ENCODE measurements at regions of chr12 and their contacts with region 1.

Region 1: DNA sequence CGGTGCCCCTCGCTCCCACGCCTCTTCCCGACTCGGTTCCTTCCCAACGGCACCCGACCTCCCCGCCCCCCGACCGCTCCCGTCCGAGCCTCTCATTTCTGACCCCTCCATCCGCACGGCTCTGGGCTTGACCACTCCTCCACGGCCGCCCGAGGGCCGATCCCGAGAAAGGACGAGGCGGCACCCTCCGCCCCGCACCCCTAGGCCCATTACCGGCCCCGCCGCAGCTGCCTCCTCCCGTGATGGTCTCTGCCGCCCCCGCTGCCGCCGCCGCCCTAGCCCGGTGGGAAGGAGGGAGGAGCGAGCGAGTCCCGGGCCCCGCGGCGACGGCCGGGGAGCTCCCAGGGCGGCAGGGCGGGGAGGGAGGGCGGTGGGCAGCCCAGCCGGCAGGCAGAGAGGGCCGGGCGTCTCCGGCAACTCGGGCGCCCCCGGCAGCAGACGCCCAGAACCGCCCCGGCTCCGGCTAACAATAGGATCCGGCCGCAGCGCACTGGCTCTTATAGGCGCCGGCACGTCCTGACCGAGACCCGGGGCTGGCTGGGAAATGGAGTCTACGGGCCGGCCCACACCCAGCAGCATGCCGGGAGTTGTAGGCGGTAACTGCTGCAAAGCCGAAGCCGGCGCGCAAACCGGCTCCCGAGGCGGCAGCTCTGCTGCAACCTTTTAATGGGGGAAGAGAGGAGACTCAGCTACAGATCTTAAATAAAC is at the start of gene CSRNP2:
- DNase-seq: peak; percentile 97 to 98 (median 97)
- ATAC-seq: peak; percentile 99 to 100 (median 100)
- H3K4me3 ChIP-seq: peak within 1 kb of the TSS; percentile 74 to 99 (median 86)
- H3K27ac ChIP-seq: peak within 1 kb of the TSS; percentile 85 to 97 (median 92)
- H3K4me1 ChIP-seq: peaks cover 0 to 42% (median 18%) of the 10 kb centered on the region in 12 donors
- H3K27me3 ChIP-seq: no peaks in the 10 kb centered on the region
- CTCF ChIP-seq: peak in 4 of 12 donors; percentile 9 to 40 (median 21)
- POLR2A ChIP-seq: peak; percentile 99 to 100
- total RNA-seq, gene CSRNP2: 12.8 to 25.7 (median 18.5) TPM

Region 2: DNA sequence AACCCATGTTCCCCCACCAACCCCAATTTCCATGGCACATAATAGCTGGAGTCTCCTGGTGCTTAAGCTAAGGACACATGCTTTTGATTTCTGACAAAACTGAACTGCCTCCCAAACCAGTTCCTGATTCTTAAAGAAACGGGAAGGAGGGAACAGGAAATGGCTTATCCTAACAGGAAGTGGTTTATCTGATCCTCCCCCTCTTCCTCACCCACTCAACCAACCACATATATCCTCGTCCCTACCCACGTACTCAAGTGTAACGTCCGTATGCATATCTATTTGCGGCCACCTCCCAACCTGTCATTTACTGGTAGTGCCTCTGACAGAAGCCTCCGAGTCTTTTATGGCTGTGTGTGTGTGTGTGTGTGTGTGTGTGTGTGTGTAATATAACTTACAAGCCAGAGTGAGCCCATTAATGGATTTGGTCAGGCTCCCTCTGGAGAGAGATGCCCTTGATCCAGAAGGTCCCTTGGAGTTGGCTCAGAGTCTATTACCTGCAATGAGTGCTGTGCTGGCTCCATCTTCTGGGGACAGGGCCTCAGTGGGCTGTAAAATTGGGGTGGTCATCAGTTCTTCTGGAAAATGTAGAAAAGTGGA is 163.1 kb after region 1 on chr12:
- intact Hi-C with region 1: loop called in 1 of 10 experiments (anchors 10 kb)
- DNase-seq: peak in 1 of 5 donors; percentile 36
- ATAC-seq: peak; percentile 23 to 85 (median 68)
- H3K4me3 ChIP-seq: no peak overlapping the region
- H3K27ac ChIP-seq: peak overlapping the region in 7 of 12 donors; percentile 3 to 84 (median 12)
- H3K4me1 ChIP-seq: peaks cover 0 to 63% (median 22%) of the 10 kb centered on the region in 12 donors
- H3K27me3 ChIP-seq: no peaks in the 10 kb centered on the region
- CTCF ChIP-seq: peak in 4 of 12 donors; percentile 8 to 32 (median 10)
- POLR2A ChIP-seq: no peak

Region 3: DNA sequence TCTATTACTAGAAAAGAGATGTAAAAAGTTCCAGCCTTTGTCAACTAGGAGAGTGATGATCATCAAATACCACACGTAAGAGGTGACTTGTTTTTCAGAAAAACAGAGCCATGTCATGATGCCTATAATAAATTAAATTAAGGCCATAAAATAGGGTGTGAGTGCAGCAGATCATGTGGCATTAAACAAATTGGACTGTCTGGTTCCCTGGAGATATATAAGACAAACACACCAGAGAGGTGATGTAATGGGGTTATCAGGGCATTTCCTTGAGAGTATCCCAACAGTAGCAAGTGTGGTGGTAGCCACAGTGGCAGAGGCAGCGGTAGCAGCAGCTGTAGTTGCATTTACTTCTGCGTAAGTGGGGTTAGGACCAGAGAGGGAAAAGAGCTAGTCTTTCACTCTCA is 322.5 kb after region 1 on chr12:
- intact Hi-C with region 1: no loop called
- DNase-seq: no peak
- ATAC-seq: no peak
- H3K4me3 ChIP-seq: no peak overlapping the region
- H3K27ac ChIP-seq: no peak overlapping the region
- H3K4me1 ChIP-seq: no peaks in the 10 kb centered on the region
- H3K27me3 ChIP-seq: peaks cover 0 to 5% (median 0%) of the 10 kb centered on the region in 9 donors
- CTCF ChIP-seq: no peak
- POLR2A ChIP-seq: no peak